PC-9 (cell line): ENCODE measurements at regions of chr6 and their contacts with region 1.

Region 1: GRCh38 chr6:139881728-139882211 is 507.3 kb upstream of the CITED2 start:
- DNase-seq: no peak
- H3K4me3 ChIP-seq: no peak overlapping the region
- H3K27ac ChIP-seq: no peak overlapping the region
- H3K4me1 ChIP-seq: peaks cover 22% of the 10 kb centered on the region
- H3K27me3 ChIP-seq: no peaks in the 10 kb centered on the region
- CTCF ChIP-seq: peak; percentile 81

Region 2: DNA sequence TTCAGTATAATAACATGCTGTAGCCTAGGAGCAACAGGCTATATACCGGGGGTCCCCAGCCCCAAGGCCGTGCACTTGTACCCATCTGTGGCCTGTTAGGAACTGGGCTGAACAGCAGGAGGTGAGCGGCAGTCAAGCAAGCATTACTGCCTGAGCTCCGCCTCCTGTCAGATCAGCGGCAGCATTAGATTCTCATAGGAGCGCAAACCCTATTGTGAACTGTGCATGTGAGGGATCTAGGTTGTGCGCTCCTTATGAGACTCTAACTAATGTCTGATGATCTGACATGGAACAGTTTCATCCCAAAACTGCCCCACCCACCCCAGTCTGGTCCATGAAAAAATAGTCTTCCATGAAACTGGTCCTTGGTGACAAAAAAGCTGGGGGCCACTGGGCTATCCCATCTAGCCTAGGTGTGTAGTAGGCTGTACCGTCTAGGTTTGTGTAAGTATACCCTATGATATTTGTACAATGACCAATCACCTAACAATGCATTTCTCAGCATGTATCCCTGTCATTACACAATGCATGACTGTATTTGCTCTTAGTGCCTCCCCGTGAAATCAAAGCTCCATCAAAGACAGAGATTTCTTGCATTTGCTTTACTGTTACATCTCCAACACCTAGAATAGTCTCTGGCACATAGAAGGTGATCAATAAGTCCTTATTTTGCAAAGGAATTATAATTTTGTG is 1413.3 kb before region 1 on chr6:
- CTCF ChIA-PET with region 1: no interaction called
- POLR2A ChIA-PET with region 1: no interaction called
- intact Hi-C with region 1: no loop called
- DNase-seq: peak in 1 of 2 experiments; percentile 95
- H3K4me3 ChIP-seq: no peak overlapping the region
- H3K27ac ChIP-seq: peak overlapping the region; percentile 75
- H3K4me1 ChIP-seq: peaks cover 62% of the 10 kb centered on the region
- H3K27me3 ChIP-seq: no peaks in the 10 kb centered on the region
- CTCF ChIP-seq: no peak

Region 3: GRCh38 chr6:139846538-139847456 is 35.0 kb before region 1 on chr6:
- CTCF ChIA-PET with region 1: no interaction called
- POLR2A ChIA-PET with region 1: no interaction called
- intact Hi-C with region 1: no loop called
- DNase-seq: no peak
- H3K4me3 ChIP-seq: no peak overlapping the region
- H3K27ac ChIP-seq: no peak overlapping the region
- H3K4me1 ChIP-seq: no peaks in the 10 kb centered on the region
- H3K27me3 ChIP-seq: no peaks in the 10 kb centered on the region
- CTCF ChIP-seq: no peak

Region 4: DNA sequence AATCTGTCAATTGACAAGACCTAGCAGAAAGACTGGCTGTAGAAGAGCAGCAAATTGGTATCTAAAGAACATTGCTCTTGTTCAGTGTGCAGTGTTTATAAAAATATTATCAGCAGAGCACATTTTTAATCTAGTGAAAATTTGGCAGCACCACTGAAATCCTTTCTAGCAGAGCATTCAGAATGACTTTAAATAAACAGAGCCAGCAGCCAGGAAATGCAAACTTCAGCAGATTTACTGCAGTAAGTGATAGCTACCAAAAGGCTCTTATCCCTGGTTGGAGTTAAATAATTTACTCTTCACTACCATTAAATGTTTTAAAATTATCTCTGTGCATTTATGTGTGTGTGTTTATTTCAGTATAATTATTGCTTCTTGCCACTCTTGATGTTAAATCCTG is 83.6 kb after region 1 on chr6:
- CTCF ChIA-PET with region 1: no interaction called
- POLR2A ChIA-PET with region 1: no interaction called
- intact Hi-C with region 1: loop called (anchors 10 kb)
- DNase-seq: no peak
- H3K4me3 ChIP-seq: no peak overlapping the region
- H3K27ac ChIP-seq: no peak overlapping the region
- H3K4me1 ChIP-seq: peaks cover 14% of the 10 kb centered on the region
- H3K27me3 ChIP-seq: no peaks in the 10 kb centered on the region
- CTCF ChIP-seq: no peak

Region 5: GRCh38 chr6:139996253-139996834 is 114.6 kb after region 1 on chr6:
- CTCF ChIA-PET with region 1: no interaction called
- POLR2A ChIA-PET with region 1: no interaction called
- intact Hi-C with region 1: no loop called
- DNase-seq: no peak
- H3K4me3 ChIP-seq: no peak overlapping the region
- H3K27ac ChIP-seq: no peak overlapping the region
- H3K4me1 ChIP-seq: no peaks in the 10 kb centered on the region
- H3K27me3 ChIP-seq: no peaks in the 10 kb centered on the region
- CTCF ChIP-seq: no peak

Region 6: GRCh38 chr6:140062043-140063020 is 180.6 kb after region 1 on chr6:
- CTCF ChIA-PET with region 1: no interaction called
- POLR2A ChIA-PET with region 1: no interaction called
- intact Hi-C with region 1: loop called (anchors 5 kb)
- DNase-seq: peak; percentile 51 to 97
- H3K4me3 ChIP-seq: peak overlapping the region; percentile 4; the same call in 1 of the 2 replicates
- H3K27ac ChIP-seq: peak overlapping the region; percentile 66
- H3K4me1 ChIP-seq: peaks cover 32% of the 10 kb centered on the region
- H3K27me3 ChIP-seq: no peaks in the 10 kb centered on the region
- CTCF ChIP-seq: no peak

Region 7: GRCh38 chr6:140073456-140073855 is 191.7 kb after region 1 on chr6:
- CTCF ChIA-PET with region 1: no interaction called
- POLR2A ChIA-PET with region 1: no interaction called
- intact Hi-C with region 1: no loop called
- DNase-seq: no peak
- H3K4me3 ChIP-seq: no peak overlapping the region
- H3K27ac ChIP-seq: no peak overlapping the region
- H3K4me1 ChIP-seq: peaks cover 18% of the 10 kb centered on the region
- H3K27me3 ChIP-seq: no peaks in the 10 kb centered on the region
- CTCF ChIP-seq: no peak